Heart right ventricle (tissue), 16 donors: ENCODE measurements at regions of chr12 and their contacts with region 1.

Region 1: DNA sequence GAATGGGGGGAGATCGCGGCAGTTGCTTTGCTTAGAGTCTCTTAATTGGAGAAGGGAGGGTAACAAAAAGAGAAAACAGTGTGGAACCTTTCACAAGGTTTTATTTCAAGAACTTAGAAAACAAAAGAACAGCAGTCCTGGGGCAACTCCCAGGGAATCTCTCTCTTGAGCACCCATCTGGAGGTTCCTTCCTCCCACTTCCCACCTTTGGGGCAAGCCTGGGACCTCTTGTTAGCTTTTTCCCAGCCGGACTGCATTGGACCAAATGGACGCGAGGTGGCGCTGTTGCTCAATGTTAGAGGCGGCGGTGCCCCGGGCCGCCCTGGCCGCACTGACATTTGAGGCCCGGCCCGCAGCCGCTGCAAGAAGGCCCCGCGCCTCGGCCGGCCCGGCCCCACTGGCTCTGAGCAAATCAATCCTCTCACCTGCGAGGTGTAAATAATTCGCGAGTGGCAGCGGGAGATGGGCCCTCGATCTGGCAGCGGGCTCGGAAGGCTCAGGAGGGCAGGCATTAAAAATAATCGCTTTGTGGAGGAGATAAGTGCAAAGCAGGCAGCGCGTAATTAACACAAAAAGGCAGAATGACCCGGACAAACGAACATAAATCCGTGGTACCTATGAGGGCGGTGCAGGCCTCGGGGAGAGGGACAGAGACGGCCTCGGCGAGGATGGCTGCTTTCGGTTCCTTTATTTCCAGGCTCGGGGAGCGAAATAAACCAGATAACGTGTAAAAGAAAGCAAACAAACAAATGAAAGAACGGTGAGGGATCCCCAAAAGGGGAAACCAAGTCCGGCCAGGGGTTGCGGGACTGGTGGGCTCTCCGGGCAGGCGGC is 2.7 kb upstream of the HOXC8 start:
- DNase-seq: peak; percentile 85 to 88
- ATAC-seq: peak; percentile 85 to 95 (median 91)
- H3K4me3 ChIP-seq: peak overlapping the region in 8 of 10 donors; percentile 17 to 44 (median 39)
- H3K27ac ChIP-seq: no peak overlapping the region
- H3K4me1 ChIP-seq: peaks cover 6 to 20% (median 16%) of the 10 kb centered on the region in 9 donors
- H3K27me3 ChIP-seq: peaks cover 43 to 98% (median 97%) of the 10 kb centered on the region in 7 donors
- CTCF ChIP-seq: peak; percentile 87 to 96 (median 93)

Region 2: DNA sequence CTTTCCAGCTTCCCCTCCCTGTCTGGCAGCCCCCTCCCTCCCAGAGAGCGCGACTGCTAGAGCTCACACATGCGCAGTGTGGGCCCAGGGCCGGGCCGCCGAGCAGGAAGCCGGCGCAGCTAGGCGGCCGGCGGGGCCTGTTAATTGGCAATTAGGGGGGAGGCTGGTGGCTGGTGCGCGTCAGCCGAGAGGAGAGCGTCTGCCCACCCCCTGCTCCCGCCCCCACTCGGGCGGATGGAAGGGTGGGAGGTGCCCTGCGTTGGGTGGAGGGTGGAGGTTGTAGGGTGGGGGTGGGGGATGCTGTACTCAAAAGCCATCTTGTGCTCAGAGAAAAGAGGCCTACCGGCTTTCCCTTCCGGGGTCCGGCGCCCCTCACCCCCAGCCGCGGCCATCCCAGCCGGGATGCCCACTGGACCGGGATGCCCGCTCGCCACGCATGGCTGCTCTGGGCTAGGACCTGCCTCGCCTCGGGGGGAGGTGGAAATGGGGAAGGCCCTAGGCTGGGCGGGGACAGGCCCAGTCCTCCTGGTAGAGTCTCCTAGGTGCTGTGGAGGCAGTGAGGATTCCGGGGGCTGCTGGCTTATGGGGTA is 11.9 kb after region 1 on chr12:
- intact Hi-C with region 1: no loop called
- DNase-seq: peak; percentile 40 to 75
- ATAC-seq: peak; percentile 80 to 89 (median 86)
- H3K4me3 ChIP-seq: peak overlapping the region; percentile 16 to 53 (median 49)
- H3K27ac ChIP-seq: peak overlapping the region in 3 of 10 donors; percentile 6 to 50 (median 16)
- H3K4me1 ChIP-seq: peaks cover 5 to 42% (median 31%) of the 10 kb centered on the region in 9 donors
- H3K27me3 ChIP-seq: peaks cover 22 to 100% (median 96%) of the 10 kb centered on the region in 7 donors
- CTCF ChIP-seq: no peak

Region 3: DNA sequence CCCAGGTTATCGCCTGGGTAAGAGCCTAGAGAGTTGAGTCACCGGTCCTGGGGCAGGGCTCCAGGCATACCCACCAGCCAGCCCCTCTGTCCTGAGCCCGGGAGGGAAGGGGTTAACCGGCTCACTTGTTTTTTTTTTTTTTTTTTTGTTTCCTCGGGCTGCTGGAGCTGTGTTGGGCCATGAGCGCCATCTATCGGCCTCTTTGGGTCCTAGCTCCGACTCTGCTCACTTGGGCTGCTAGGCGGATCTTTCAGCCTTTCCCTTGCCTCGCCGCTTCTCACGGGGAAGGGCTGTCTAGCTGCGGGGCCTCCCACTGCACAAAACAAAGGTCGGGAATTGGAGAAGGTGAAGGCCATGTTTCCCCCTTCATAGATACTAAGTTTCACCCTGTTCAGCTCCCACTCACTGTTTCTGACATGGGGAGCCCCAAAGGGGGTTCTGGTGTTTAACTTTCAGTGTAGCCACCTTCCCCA is 185.5 kb after region 1 on chr12:
- intact Hi-C with region 1: loop called in 5 of 10 experiments (anchors 1 to 2 kb)
- DNase-seq: peak; percentile 72 to 80
- ATAC-seq: peak; percentile 43 to 71 (median 60)
- H3K4me3 ChIP-seq: no peak overlapping the region
- H3K27ac ChIP-seq: no peak overlapping the region
- H3K4me1 ChIP-seq: peaks cover 0 to 34% (median 14%) of the 10 kb centered on the region in 9 donors
- H3K27me3 ChIP-seq: peaks cover 0 to 69% (median 63%) of the 10 kb centered on the region in 7 donors
- CTCF ChIP-seq: peak; percentile 73 to 87 (median 82)

Region 4: DNA sequence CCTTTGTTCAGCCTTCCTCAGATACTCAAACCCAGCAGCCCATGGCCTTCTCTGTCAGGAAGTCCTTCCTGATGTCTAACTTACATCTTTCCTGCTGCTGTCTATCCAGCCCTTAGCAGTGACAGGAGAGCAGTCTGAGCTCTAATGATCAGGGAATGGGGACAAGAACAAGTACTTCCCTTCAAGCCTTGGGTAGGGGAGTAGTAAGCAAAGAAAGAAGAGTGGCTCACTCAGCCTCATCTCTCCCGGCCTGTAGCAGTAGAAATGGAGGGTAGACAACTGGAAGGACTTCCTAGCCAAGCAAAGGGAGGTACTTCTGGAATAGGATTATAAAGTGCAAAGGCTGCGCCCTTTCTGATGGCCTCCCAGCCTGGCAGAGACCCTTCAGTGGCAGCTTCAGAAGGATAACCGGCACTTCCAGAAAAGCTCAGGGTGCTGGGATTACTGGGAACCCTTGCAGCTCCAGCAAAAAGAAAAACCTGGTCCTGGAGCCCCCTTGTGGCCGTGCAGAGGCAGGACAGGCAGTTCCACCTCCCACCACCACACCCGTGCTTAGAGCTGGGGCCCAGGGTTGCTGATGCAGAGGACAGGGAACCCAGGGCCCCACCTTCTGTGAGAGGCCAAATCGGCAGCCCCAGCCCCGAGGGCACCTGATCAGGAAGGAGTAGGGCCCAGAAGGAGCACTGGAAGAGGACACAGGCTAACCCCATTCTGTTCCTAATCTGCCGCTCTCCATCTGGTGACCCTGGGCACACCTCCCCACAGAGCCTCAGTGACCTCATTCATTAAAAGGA is 195.1 kb after region 1 on chr12:
- intact Hi-C with region 1: loop called in 6 of 10 experiments (anchors 1 to 5 kb)
- DNase-seq: peak; percentile 53 to 61
- ATAC-seq: peak; percentile 71 to 88 (median 82)
- H3K4me3 ChIP-seq: no peak overlapping the region
- H3K27ac ChIP-seq: no peak overlapping the region
- H3K4me1 ChIP-seq: peaks cover 0 to 8% (median 0%) of the 10 kb centered on the region in 9 donors
- H3K27me3 ChIP-seq: peaks cover 4 to 98% (median 82%) of the 10 kb centered on the region in 7 donors
- CTCF ChIP-seq: peak; percentile 61 to 98 (median 92)

Region 5: DNA sequence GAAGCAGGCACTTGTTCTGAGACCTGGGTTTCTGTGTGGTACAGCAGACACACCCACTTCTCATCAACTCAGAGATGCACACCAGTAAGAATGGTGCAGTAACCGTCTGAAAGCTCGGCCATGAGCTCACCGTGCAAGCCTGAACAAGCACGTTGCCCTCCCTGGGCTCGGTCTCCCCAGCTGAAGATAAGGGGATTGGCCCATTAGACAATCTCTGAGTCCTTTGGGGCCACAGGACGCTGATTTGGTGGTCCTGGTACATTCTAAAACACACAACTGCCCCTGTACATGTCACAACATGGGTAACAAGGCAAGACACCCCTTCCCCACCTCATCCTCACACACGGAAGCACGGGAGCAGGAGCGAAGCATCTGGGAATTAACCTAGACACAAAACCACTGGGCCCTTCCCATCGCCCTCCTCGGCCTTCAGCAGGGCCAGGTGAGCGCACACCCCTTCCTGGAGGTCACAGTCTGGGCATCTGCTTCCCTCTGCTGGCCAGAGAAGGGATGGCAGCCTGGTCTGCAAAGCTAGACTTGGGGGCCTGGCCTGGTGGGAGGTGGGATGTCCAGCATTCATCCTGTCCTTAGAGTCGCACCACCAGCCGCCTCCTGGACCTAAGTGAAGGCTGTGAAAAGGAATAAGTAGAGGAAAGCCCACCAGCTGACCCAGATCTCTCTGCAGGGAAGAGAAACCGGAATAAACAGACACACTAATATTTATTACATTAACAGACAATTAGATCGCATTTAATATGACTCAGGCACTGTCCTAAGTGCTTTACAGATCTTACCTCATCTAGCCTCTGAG is 201.6 kb after region 1 on chr12:
- intact Hi-C with region 1: loop called in 5 of 10 experiments (anchors 2 to 5 kb)
- DNase-seq: peak; percentile 45 to 70
- ATAC-seq: peak; percentile 53 to 81 (median 72)
- H3K4me3 ChIP-seq: no peak overlapping the region
- H3K27ac ChIP-seq: no peak overlapping the region
- H3K4me1 ChIP-seq: no peaks in the 10 kb centered on the region
- H3K27me3 ChIP-seq: peaks cover 4 to 93% (median 61%) of the 10 kb centered on the region in 7 donors
- CTCF ChIP-seq: peak; percentile 64 to 91 (median 86)

Region 6: DNA sequence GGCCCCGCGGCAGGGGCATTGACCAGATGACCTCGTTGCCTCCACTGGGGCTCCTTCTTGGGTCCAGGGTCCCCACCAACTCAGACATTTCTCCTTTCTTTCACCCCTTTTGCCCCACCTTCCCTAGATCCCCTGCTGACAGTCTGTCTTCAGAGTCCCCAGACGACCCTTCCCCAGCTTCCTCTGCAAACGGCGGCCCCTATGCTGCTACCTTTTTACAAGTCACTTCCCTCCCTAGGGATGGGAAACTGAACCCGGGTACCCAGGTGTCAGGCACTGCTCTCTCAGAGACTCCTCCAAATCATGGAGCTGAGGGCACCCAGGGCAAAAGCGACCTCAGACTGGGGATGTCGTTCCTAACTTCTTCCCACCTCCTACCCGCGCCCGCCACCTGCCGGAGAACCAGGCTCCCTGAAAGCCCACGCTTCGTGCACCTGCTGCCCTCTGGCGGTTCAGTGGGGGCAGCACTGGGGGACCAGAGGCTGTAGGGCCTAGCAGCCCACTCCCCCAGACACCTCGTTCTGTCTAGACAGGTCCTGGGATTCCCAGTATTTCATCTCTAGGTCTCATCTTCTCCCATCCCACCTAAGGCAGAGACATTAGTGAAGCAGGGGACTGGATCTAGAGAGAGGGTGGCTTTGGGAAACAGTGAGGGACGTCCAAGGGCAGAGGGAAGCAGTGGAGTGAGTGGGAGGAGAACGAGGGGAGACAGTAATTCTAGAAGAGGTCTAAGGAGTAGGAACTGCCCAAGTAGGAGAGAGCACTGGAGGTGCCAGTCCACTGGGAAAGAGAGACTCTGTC is 373.5 kb after region 1 on chr12:
- intact Hi-C with region 1: loop called in 1 of 10 experiments (anchors 10 kb)
- DNase-seq: peak; percentile 93 to 94
- ATAC-seq: peak; percentile 79 to 94 (median 87)
- H3K4me3 ChIP-seq: peak overlapping the region; percentile 37 to 63 (median 58)
- H3K27ac ChIP-seq: peak overlapping the region in 9 of 10 donors; percentile 63 to 87 (median 76)
- H3K4me1 ChIP-seq: peaks cover 6 to 55% (median 31%) of the 10 kb centered on the region in 9 donors
- H3K27me3 ChIP-seq: no peaks in the 10 kb centered on the region
- CTCF ChIP-seq: peak; percentile 100